ENCODE measurements at regions of chr20 and their contacts with region 1.

Region 1: DNA sequence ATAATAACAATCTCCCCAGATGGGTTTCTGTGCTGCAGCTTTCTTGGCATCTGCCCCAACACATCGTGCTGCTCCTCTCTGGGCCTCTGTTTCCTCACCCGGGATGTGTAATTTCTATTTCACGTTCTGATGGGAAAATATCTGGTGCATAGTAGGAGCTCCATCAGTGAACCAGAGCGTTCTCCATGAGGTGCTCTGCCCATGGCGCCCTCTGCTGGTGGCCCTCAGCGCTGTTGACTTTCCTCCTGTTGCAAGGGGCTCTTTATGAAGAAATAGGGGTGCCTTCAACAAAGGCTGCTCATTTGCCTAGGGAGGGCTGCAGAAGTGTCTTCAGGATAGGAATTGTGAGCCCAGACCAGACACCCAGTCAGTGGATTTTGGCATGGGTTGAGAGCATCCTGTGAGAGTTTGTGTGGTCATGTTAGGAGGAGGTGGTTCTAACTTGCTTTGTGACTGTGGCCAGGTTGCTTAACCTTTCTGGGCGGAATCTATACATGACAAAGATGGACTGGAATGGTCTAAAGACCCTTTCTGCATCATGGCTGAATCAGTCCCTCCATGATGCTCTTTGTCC is 8.1 kb downstream of the SCRT2 start:
- H3K4me3 ChIP-seq: no peak overlapping the region
- H3K27ac ChIP-seq: no peak overlapping the region
- H3K4me1 ChIP-seq: no peaks in the 10 kb centered on the region
- CTCF ChIP-seq: peak; percentile 54; the same call in 1 of the 2 replicates

Region 2: DNA sequence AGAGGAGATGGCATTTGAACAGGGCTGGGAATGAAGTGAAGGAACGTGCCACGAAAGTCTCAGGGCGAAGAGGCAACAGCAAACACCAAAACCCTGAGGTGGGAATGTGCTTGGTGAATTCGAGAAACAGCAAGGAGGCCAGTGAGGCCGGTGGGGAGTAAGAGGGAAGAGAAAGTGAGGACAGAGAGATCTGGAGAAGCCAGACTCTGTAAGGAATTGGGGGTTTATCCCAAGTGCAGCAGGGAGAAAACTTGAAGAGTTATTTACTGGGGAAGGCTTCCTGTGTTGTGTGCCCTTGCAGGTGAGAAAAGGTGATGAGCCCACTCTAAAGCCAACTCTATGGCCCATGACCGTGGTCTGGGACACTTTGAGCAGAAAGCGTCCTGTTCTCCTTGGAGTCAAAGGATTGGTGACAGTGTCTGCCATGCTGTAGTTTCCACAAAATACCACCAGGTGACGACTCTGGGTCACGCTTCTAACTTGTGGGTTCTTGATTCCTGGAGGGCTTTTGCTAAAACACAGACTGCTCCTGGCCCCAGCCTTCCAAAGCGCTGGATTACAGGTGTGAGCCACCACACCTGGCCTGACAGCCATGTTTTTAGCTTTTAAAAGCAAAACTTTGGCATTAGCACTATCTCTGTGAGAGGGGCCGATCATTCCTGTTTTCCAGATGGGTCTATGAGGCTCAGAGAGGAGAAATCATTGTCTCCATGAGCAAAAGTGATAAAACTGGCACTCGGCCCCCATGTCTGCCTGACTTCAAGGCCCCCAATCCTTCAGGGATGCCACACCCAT is 105.8 kb before region 1 on chr20:
- CTCF ChIA-PET with region 1: interaction called, 68 read pairs
- POLR2A ChIA-PET with region 1: no interaction called
- H3K4me3 ChIP-seq: no peak overlapping the region
- H3K27ac ChIP-seq: no peak overlapping the region
- H3K4me1 ChIP-seq: no peaks in the 10 kb centered on the region
- CTCF ChIP-seq: peak; percentile 83

Region 3: GRCh38 chr20:653110-653589 is 14.3 kb before region 1 on chr20 and contains the start of gene SRXN1:
- CTCF ChIA-PET with region 1: interaction called, 81 read pairs
- POLR2A ChIA-PET with region 1: interaction called, 3 read pairs
- H3K4me3 ChIP-seq: peak within 1 kb of the TSS; percentile 59
- H3K27ac ChIP-seq: peak within 1 kb of the TSS; percentile 77
- H3K4me1 ChIP-seq: no peaks in the 10 kb centered on the region
- CTCF ChIP-seq: peak; percentile 39; the same call in 1 of the 2 replicates

Region 4: DNA sequence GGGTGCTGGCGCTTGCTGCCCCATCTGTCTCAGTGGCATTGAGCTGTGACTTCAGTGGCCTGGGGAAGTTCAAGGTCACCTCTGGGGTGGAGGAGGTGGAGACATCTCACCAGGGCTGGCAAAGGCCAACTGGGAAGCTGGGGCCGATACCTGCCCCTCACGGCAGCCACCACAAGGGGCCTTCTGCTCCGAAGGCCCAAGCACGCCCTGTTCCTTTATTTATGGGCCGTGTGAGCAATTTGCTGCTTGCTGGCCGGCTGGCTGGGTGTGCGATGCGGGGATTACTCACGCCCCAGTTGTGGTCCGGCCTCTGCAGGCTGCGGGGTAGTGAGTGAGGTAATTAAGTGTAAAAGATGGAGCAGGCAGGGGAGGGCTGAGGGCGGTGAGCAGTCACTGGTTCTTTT is 21.3 kb after region 1 on chr20:
- CTCF ChIA-PET with region 1: interaction called, 14 read pairs
- POLR2A ChIA-PET with region 1: no interaction called
- H3K4me3 ChIP-seq: no peak overlapping the region
- H3K27ac ChIP-seq: no peak overlapping the region
- H3K4me1 ChIP-seq: no peaks in the 10 kb centered on the region
- CTCF ChIP-seq: no peak

Region 5: DNA sequence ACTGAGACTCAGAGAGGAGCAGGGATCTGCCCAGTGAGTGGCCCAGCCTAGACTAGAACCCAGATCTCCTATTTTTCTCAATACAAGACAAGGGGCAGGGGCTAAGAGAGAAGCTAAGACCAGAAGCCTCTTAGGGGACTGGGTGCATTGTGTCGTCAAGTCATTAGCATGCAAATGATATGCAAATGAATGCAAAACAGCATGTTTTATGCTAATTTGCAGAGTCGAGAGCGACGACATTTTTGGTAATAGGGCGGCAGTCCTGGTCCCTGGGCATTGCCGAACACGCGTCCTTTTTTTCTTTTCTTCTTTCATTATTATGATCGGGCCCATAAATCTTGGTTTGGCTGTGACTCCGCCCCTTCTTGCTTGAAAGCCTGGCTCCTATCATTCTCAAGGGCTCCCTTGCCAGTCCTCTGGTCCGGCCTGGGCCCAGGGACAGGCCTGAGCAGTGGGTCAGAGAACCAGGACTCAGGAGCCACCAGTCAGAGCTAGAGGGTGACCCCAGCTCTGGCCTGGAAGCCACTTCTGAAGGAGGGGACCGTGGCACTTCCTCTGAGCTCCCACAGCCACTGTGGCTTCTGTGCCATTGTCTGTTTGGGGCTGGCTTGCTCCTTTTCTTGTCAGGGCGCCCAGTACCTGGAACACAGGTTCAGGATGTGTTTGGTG is 40.1 kb after region 1 on chr20:
- CTCF ChIA-PET with region 1: interaction called, 10 read pairs
- POLR2A ChIA-PET with region 1: no interaction called
- H3K4me3 ChIP-seq: no peak overlapping the region
- H3K27ac ChIP-seq: no peak overlapping the region
- H3K4me1 ChIP-seq: no peaks in the 10 kb centered on the region
- CTCF ChIP-seq: no peak

Region 6: DNA sequence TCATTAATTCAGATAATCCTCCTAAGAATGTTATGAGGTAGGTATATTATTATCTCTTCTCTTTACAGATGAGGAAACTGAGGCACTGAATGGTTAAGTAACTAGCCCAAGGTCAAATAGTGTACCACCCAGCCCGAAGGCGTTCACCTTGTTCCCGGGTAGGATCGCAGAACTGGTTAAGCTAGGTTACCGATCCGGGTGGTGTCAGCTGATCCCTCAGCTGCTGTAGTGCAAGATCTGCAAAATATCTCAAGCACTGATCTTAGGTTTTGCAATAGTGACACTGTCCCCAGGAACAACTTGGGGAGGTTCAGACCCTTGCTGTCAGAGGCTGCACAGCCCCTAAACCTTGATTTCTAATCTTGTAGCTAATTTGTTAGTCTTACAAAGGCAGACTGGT is 72.7 kb after region 1 on chr20:
- CTCF ChIA-PET with region 1: interaction called, 25 read pairs
- POLR2A ChIA-PET with region 1: interaction called, 3 read pairs
- H3K4me3 ChIP-seq: no peak overlapping the region
- H3K27ac ChIP-seq: no peak overlapping the region
- H3K4me1 ChIP-seq: no peaks in the 10 kb centered on the region
- CTCF ChIP-seq: no peak